ENCODE measurements at regions of chr7 and their contacts with region 1.

Region 1: DNA sequence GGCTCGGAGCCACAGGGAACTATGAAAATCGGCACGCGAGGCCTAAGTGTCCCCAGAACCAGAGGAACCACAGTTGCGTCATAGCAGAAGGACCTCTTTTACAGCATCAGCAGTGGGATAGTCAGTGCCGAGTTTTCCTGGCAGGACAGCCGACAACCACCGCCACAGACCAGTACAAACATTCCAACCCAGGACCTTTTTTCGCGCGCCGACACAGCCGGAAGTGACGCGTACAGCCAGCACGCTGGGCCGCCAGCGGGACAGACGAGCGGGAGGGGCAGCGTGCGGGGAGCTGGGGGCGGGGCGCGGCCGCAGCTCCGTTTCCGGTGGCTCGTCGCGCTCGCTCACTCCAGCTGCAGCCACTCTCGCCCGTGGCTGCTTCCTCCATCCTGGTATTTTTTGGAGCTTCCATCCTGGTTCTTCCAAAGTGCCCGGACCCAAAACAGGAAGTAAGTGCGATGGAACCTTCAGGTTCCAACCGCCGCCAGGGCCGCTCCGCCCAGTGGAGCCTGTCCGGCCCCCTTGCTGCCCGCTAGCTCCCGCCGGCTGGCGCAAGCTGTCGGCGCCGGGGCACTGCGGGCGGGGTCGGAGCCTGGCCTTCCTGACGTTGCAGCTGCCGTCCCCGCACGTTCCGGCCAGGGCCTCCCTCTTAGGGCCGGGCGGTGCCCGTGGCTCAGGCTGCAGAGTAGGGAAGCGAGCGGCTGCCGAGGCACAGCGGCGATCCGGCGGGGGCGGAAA is at the start of gene DMTF1:
- DNase-seq: peak; percentile 96
- H3K4me3 ChIP-seq: peak within 1 kb of the TSS; percentile 96 to 100 (median 100)
- H3K27ac ChIP-seq: peak within 1 kb of the TSS; percentile 84
- H3K4me1 ChIP-seq: peaks cover 40% of the 10 kb centered on the region
- H3K27me3 ChIP-seq: no peaks in the 10 kb centered on the region
- CTCF ChIP-seq: no peak
- POLR2A ChIP-seq: peak; percentile 87
- total RNA-seq, gene DMTF1: 86.9 and 100.0 TPM in 2 replicates

Region 2: GRCh38 chr7:86926732-86927131 is 225.5 kb before region 1 on chr7:
- CTCF ChIA-PET with region 1: interaction called, 343 read pairs
- POLR2A ChIA-PET with region 1: interaction called, 3 read pairs
- dilution Hi-C with region 1: no loop called
- intact Hi-C with region 1: loop called (anchors 1 kb)
- DNase-seq: peak; percentile 58
- H3K4me3 ChIP-seq: no peak overlapping the region
- H3K27ac ChIP-seq: no peak overlapping the region
- H3K4me1 ChIP-seq: peaks cover 5% of the 10 kb centered on the region
- H3K27me3 ChIP-seq: no peaks in the 10 kb centered on the region
- CTCF ChIP-seq: peak; percentile 60 to 65
- POLR2A ChIP-seq: no peak

Region 3: GRCh38 chr7:87059525-87060287 is 92.6 kb before region 1 on chr7 and contains the start of gene ELAPOR2:
- CTCF ChIA-PET with region 1: interaction called, 43 read pairs
- POLR2A ChIA-PET with region 1: interaction called, 14 read pairs
- dilution Hi-C with region 1: no loop called
- intact Hi-C with region 1: loop called (anchors 1 kb)
- DNase-seq: peak; percentile 83
- H3K4me3 ChIP-seq: peak within 1 kb of the TSS; percentile 72 to 96 (median 79)
- H3K27ac ChIP-seq: peak within 1 kb of the TSS; percentile 57
- H3K4me1 ChIP-seq: peaks cover 43% of the 10 kb centered on the region
- H3K27me3 ChIP-seq: no peaks in the 10 kb centered on the region
- CTCF ChIP-seq: peak; percentile 32 to 61
- POLR2A ChIP-seq: peak; percentile 60
- total RNA-seq, gene ELAPOR2: 43.8 and 63.5 TPM in 2 replicates

Region 4: DNA sequence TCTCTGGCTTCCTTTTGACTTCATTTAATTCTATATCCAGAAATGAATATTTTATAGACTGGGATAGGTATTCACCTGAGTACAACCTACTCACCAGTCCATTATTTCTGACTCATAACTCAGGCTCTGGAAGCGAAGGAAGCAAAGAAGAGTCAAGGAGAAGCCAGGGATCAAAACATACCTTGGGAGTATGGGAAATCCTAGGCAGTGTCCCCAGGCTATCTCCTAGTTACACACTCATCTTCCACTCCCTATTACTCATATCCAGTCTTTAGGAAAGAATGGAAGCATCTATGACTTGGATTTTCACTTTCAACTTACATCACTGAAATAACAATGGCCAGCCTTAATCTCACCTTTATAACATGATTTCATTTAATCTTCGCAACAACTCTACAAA is 52.0 kb before region 1 on chr7:
- CTCF ChIA-PET with region 1: no interaction called
- POLR2A ChIA-PET with region 1: no interaction called
- dilution Hi-C with region 1: no loop called
- intact Hi-C with region 1: no loop called
- DNase-seq: no peak
- H3K4me3 ChIP-seq: no peak overlapping the region
- H3K27ac ChIP-seq: no peak overlapping the region
- H3K4me1 ChIP-seq: no peaks in the 10 kb centered on the region
- H3K27me3 ChIP-seq: peaks cover 0 to 6% of the 10 kb centered on the region in 2 experiments
- CTCF ChIP-seq: no peak
- POLR2A ChIP-seq: no peak

Region 5: DNA sequence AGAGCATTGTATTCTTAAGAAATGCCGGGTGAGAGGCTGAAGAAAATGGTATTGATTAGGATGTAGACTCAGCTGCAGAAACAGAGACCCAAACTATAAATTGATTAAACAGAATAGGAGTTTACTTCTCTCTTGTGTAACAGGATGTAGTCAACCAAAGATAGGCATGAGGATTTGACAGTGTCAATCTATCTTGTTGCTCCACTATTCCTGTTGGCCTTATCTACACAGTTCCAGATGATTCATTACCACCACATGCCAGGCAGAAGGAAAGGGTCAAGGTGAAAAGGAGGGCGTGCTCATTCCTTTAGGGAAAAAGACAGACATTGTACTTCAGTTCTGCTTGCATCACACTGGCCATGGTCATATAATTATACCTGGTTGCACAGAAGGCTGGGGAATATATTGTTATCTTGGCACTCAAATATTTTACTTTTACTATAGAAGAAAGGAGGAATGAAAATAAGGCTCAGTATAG is 12.0 kb before region 1 on chr7:
- CTCF ChIA-PET with region 1: interaction called, 10 read pairs
- POLR2A ChIA-PET with region 1: no interaction called
- dilution Hi-C with region 1: no loop called
- intact Hi-C with region 1: no loop called
- DNase-seq: peak; percentile 62
- H3K4me3 ChIP-seq: no peak overlapping the region
- H3K27ac ChIP-seq: no peak overlapping the region
- H3K4me1 ChIP-seq: peaks cover 4% of the 10 kb centered on the region
- H3K27me3 ChIP-seq: no peaks in the 10 kb centered on the region
- CTCF ChIP-seq: no peak
- POLR2A ChIP-seq: no peak

Region 6: DNA sequence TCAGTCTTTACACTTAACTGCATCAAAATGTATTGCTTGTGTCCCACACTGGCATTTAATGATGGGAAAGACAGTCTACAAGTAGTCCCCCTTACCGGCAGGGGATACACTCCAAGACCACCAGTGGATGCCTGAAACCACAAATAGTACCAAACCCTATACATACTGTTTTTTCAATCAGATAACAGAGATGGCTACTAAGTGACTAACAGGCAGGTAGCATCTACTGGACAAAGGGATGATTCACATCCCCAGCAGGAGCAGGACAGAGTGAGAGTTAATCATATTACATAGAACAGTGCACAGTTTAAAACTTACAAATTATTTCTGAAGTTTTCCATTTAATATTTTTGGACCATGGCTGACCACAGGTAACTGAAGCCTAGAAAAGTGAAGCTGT is 54.1 kb after region 1 on chr7:
- CTCF ChIA-PET with region 1: no interaction called
- POLR2A ChIA-PET with region 1: no interaction called
- dilution Hi-C with region 1: no loop called
- intact Hi-C with region 1: no loop called
- DNase-seq: no peak
- H3K4me3 ChIP-seq: no peak overlapping the region
- H3K27ac ChIP-seq: no peak overlapping the region
- H3K4me1 ChIP-seq: no peaks in the 10 kb centered on the region
- H3K27me3 ChIP-seq: no peaks in the 10 kb centered on the region
- CTCF ChIP-seq: no peak
- POLR2A ChIP-seq: no peak

Region 7: DNA sequence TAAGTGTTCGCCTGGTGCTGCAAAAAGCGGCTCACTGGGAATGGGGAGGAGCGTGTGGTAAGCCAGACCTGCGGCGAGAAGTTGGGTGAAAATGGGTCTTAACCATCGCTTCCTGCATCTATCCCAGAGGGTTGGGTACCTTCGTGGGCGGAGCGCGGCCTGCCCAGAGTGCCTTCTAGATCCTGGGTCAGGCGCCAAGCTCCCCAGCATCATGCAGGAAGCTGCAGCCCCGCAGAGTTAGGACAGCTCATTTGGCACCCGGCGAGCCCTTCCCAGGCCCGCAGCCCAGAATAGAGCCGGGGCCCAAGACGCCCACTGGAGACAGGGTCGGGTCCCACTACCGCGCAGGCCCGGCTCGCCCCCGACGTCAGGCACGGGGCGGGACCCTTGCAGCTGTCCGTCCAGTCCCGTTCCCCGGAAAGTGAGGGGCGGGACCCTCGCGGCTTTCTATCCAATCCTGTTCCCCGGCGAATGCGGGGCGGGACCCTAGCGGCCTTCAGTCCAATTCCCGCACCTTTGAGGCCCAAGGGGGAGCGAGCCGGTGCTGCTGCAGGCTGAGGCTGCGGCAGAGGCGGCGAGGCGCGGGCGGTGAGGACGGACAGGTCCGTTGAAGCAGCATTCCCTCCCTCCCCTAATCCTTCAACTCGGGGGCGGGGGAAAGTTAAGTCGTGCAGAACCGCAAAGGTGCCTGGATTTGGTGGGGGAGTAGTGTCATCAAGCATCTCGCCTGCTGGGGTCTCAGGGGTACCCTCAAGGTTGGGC is 193.1 kb after region 1 on chr7 and contains the start of gene CROT:
- CTCF ChIA-PET with region 1: no interaction called
- POLR2A ChIA-PET with region 1: no interaction called
- dilution Hi-C with region 1: no loop called
- intact Hi-C with region 1: loop called (anchors 10 kb)
- DNase-seq: peak; percentile 97
- H3K4me3 ChIP-seq: peak within 1 kb of the TSS; percentile 49 to 75 (median 67)
- H3K27ac ChIP-seq: peak within 1 kb of the TSS; percentile 4
- H3K4me1 ChIP-seq: peaks cover 6% of the 10 kb centered on the region
- H3K27me3 ChIP-seq: no peaks in the 10 kb centered on the region
- CTCF ChIP-seq: peak in 1 of 2 donors; percentile 10
- POLR2A ChIP-seq: peak; percentile 83
- total RNA-seq, gene CROT: 5.7 and 6.6 TPM in 2 replicates

Region 8: DNA sequence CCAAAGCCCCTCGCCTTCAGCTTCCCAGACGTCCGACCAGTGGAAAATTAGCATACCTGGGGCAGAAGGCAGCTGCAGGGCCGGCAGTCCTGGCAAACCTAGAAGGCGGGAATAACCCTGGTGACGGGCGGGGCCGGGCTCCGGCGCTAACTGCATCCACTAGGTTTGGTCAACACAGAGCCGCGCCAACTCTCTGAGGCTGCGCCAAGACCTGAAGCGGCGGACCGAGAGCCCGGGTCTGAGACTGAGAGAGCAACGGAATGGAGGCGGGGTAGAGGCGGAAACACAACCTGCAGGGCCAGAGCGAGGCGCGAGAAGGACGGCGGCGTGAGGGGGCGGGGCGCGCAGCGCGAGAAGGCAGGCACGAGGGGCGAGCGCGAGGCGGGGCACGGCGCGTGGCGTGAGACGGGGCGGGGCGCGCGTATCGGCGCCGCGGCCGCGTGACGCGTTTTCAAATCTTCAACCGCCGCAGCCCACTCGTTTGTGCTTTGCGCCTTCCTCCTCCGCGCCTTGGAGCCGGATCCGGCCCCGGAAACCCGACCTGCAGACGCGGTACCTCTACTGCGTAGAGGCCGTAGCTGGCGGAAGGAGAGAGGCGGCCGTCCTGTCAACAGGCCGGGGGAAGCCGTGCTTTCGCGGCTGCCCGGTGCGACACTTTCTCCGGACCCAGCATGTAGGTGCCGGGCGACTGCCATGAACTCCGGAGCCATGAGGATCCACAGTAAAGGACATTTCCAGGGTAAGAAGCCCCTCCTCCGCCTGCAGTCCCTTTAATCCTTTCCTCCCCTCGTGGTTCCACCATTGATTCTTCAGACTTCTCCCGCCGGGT is 724.0 kb after region 1 on chr7 and contains the starts of genes DBF4 and SLC25A40:
- CTCF ChIA-PET with region 1: no interaction called
- POLR2A ChIA-PET with region 1: no interaction called
- dilution Hi-C with region 1: no loop called
- intact Hi-C with region 1: loop called (anchors 2 kb)
- DNase-seq: peak; percentile 94
- H3K4me3 ChIP-seq: peak within 1 kb of the TSS; percentile 93 to 100 (median 98)
- H3K27ac ChIP-seq: peak within 1 kb of the TSS; percentile 61
- H3K4me1 ChIP-seq: peaks cover 17% of the 10 kb centered on the region
- H3K27me3 ChIP-seq: no peaks in the 10 kb centered on the region
- CTCF ChIP-seq: no peak
- POLR2A ChIP-seq: peak; percentile 96
- total RNA-seq, gene DBF4: 35.8 and 39.7 TPM in 2 replicates
- total RNA-seq, gene SLC25A40: 17.1 and 21.6 TPM in 2 replicates